MCF 10A (cell line): ENCODE measurements at regions of chr12 and their contacts with region 1.

Region 1: DNA sequence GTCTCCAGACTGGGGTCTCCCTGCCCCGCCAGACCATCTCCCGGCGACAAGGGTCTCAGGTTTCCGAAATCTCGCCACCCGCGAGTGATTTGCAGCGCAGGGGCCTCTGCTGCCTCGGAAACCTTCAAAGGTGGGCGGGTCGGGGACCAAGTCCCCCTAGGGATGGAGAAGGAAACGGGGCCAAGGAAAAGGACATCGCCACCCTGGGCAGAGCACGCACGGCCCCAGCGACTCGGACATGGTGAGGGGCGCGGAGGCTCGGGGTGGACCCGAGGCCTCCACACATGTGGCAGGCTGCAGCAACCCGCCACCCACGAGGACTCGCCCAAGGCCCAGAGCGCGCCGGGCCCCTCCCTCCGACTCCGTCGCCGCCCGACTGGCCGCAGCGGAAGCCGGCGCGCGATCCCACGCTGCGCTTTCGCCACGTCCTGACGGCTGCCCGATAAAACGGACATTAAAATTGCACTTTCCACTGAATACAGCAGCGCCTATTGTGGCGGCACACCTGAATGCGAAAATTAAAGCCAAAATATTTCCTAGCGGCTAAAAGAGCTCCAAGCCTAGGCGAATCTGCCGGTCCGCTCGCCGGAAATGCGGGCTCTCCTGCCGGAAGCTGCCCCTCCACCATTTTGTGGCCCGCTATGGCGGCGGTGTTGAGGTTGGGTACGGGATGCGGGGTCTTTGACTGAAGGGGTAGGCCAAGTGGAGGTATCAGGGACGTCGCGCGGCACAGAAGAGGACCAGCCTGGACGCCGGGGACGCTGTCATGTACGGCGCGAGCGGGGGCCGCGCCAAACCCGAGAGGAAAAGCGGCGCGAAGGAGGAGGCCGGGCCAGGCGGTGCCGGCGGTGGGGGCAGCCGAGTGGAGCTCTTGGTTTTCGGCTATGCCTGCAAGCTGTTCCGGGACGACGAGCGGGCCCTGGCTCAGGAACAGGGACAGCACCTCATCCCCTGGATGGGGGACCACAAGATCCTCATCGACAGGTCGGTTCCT is at the start of gene SFSWAP:
- DNase-seq: peak; percentile 67
- H3K4me3 Mint-ChIP-seq: peak within 1 kb of the TSS; percentile 90
- H3K27ac Mint-ChIP-seq: peak within 1 kb of the TSS; percentile 100
- H3K4me1 Mint-ChIP-seq: peaks cover 5% of the 10 kb centered on the region
- H3K27me3 Mint-ChIP-seq: no peaks in the 10 kb centered on the region
- CTCF ChIP-seq: no peak
- total RNA-seq, gene SFSWAP: 68.2 and 68.8 TPM in 2 replicates

Region 2: DNA sequence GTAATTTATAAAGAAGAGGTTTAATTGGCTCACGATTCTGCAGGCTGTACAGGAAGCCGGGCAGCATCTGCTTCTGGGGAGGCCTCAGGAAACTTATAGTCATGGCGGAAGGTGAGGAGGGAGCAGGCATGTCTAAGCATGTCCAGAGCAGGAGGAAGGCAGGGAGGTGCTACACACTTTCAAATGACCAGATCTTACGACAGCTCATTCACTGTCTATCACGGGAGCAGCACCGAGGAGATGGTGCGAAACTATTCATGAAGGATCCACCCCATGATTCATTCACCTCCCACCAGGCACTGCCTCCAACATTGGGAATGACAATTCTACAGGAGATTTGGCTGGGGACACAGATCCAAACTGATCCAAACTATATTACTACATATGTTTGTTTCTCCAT is 10.2 kb after region 1 on chr12:
- CTCF ChIA-PET with region 1: interaction called, 5 read pairs
- POLR2A ChIA-PET with region 1: interaction called, 38 read pairs
- intact Hi-C with region 1: no loop called
- DNase-seq: peak; percentile 74
- H3K4me3 Mint-ChIP-seq: peak overlapping the region; percentile 24
- H3K27ac Mint-ChIP-seq: peak overlapping the region; percentile 98
- H3K4me1 Mint-ChIP-seq: peaks cover 14% of the 10 kb centered on the region
- H3K27me3 Mint-ChIP-seq: no peaks in the 10 kb centered on the region
- CTCF ChIP-seq: no peak

Region 3: GRCh38 chr12:131793243-131794022 is 82.7 kb after region 1 on chr12:
- CTCF ChIA-PET with region 1: no interaction called
- POLR2A ChIA-PET with region 1: no interaction called
- intact Hi-C with region 1: no loop called
- DNase-seq: no peak
- H3K4me3 Mint-ChIP-seq: no peak overlapping the region
- H3K27ac Mint-ChIP-seq: no peak overlapping the region
- H3K4me1 Mint-ChIP-seq: no peaks in the 10 kb centered on the region
- H3K27me3 Mint-ChIP-seq: no peaks in the 10 kb centered on the region
- CTCF ChIP-seq: no peak